Right cardiac atrium (tissue), 5 donors: ENCODE measurements at regions of chr4 and their contacts with region 1.

Region 1: DNA sequence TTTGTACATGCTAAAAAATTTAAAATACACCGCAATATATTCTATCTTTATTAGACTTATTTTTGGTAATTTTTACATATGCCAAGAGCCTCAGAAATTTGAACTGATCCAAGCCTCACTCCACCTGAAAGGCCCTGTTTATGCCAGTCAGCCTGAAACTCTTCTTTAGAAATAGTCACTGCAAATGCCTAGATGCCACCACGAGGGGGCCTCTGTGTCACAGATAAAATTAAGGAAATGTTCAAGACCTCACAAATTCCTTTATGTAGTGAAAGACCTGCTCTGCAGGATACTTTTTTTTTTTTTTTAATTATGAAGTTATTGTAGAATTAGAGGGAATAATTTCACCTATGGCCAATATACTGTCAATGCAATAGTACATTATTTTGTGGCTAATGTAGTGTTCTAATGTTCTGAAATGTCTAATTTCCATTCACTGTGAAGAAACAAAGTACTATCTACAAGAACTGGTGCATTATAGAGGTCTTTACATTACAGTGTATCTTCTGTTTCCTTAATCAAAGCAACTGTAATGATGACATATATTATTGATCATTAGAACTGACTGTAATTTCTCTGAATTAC is 69.8 kb downstream of the DTHD1 start:
- DNase-seq: peak; percentile 53 to 80 (median 66)
- ATAC-seq: peak in 1 of 2 donors; percentile 47
- H3K4me3 ChIP-seq: no peak overlapping the region
- H3K27ac ChIP-seq: no peak overlapping the region
- H3K4me1 ChIP-seq: no peaks in the 10 kb centered on the region
- H3K27me3 ChIP-seq: no peaks in the 10 kb centered on the region

Region 2: DNA sequence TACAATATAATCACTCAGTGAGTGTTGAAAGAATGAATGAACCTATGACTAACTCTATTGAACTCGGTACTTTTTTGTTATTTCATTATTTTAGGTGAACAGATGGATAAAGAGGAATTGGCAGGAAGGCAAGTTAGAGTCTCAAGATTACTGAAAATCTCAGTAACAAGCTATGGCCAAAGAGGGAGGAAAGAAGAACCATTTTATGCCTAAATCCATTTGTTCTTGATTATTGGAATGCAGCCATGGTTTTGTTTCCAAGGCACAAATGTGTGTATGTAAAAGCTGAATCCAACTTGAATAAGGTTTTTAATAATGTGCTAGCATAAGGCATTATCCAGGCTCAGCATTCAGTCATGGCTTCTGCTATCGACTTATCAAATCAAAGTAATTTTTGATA is 126.7 kb after region 1 on chr4:
- intact Hi-C with region 1: no loop called
- DNase-seq: no peak
- ATAC-seq: no peak
- H3K4me3 ChIP-seq: no peak overlapping the region
- H3K27ac ChIP-seq: no peak overlapping the region
- H3K4me1 ChIP-seq: no peaks in the 10 kb centered on the region
- H3K27me3 ChIP-seq: no peaks in the 10 kb centered on the region

Region 3: DNA sequence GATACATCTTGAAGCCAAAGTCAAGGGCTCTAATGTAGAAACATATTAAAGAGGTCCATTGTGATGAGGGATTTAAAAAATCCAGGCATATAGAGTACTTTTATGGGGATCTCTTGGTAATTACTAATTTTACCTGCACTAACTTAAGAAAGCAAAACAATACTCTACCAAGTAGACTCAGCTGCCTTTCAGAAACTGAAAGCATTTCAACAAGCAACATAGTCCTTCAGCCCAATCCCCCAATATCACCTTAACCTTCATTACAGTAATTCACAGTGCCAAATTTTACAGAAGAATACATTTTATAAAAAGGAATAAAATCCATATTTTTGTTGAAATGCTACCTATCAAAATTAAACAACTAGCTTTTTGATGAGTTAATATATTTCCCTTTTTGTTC is 353.1 kb after region 1 on chr4:
- intact Hi-C with region 1: no loop called
- DNase-seq: no peak
- ATAC-seq: no peak
- H3K4me3 ChIP-seq: no peak overlapping the region
- H3K27ac ChIP-seq: no peak overlapping the region
- H3K4me1 ChIP-seq: no peaks in the 10 kb centered on the region
- H3K27me3 ChIP-seq: no peaks in the 10 kb centered on the region

Region 4: DNA sequence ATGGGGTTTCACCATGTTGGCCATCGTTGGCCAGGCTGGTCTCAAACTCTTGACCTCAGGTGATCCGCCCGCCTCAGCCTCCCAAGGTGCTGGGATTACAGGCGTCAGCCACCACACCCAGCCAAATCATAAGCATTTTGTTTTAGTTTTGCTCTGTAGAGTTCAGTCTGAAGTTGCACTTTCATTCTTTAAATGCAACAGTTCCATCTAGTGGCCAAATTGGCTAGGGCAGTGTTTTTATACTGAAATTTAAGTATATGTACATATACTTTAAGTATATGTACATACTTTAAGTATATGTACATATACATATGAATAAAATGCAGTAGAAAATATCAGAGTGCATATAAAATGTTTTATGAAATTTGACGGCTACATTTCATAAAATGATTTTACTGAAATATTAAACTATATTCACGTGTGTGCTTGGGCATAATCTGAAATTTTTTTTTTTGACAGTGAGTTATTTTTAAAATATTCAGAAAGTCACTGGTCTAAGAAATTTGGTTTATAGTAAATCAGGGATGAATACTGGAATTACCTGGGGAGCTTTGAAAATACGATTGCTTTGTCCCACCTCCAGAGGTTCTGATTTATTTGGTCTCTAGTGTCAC is 1038.9 kb after region 1 on chr4:
- intact Hi-C with region 1: loop called in 2 of 4 experiments (anchors 5 to 10 kb)
- DNase-seq: no peak
- ATAC-seq: no peak
- H3K4me3 ChIP-seq: no peak overlapping the region
- H3K27ac ChIP-seq: no peak overlapping the region
- H3K4me1 ChIP-seq: peaks cover 3% of the 10 kb centered on the region
- H3K27me3 ChIP-seq: no peaks in the 10 kb centered on the region